Naive thymus-derived CD4-positive, alpha-beta T cell (primary cell): ENCODE measurements at regions of chr6 and their contacts with region 1.

Region 1: GRCh38 chr6:11496152-11497060 is 41.1 kb upstream of the TMEM170B start:
- DNase-seq: peak; percentile 35 to 85 (median 78)
- ATAC-seq: peak; percentile 95
- H3K4me3 ChIP-seq: no peak overlapping the region
- H3K4me3 Mint-ChIP-seq: no peak overlapping the region
- H3K27ac ChIP-seq: no peak overlapping the region
- H3K27ac Mint-ChIP-seq: no peak overlapping the region
- H3K4me1 ChIP-seq: peaks cover 0 to 10% of the 10 kb centered on the region in 2 donors
- H3K4me1 Mint-ChIP-seq: peaks cover 0 to 3% (median 0%) of the 10 kb centered on the region in 7 donors
- H3K27me3 ChIP-seq: no peaks in the 10 kb centered on the region
- H3K27me3 Mint-ChIP-seq: no peaks in the 10 kb centered on the region

Region 2: DNA sequence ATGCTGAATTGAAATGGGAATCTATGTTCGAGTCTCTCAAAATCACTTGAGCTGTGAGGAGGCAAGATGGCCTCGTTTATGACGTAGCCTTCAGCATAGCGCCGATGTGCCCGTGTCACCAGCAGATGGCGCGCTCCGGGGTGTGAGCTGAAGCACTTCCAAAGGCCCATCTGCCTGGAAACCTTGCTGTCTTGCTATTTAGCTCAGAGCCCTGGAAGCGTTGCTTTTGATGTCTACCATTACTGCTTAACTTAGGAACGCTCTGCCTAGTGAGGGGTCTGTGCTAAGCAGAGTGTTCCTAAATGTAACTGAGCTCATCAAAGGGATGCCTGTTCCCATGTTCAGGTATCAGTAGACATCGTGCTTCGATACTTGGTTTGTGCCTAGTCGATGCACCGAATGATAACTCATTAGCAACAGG is 541.8 kb before region 1 on chr6:
- CTCF ChIA-PET with region 1: no interaction called
- POLR2A ChIA-PET with region 1: no interaction called
- intact Hi-C with region 1: loop called (anchors 1 kb)
- DNase-seq: peak; percentile 2 to 71 (median 32)
- ATAC-seq: peak; percentile 69
- H3K4me3 ChIP-seq: no peak overlapping the region
- H3K4me3 Mint-ChIP-seq: no peak overlapping the region
- H3K27ac ChIP-seq: no peak overlapping the region
- H3K27ac Mint-ChIP-seq: peak overlapping the region in 1 of 9 donors; percentile 20
- H3K4me1 ChIP-seq: no peaks in the 10 kb centered on the region
- H3K4me1 Mint-ChIP-seq: no peaks in the 10 kb centered on the region
- H3K27me3 ChIP-seq: no peaks in the 10 kb centered on the region
- H3K27me3 Mint-ChIP-seq: peaks cover 13 to 31% (median 26%) of the 10 kb centered on the region in 5 donors

Region 3: DNA sequence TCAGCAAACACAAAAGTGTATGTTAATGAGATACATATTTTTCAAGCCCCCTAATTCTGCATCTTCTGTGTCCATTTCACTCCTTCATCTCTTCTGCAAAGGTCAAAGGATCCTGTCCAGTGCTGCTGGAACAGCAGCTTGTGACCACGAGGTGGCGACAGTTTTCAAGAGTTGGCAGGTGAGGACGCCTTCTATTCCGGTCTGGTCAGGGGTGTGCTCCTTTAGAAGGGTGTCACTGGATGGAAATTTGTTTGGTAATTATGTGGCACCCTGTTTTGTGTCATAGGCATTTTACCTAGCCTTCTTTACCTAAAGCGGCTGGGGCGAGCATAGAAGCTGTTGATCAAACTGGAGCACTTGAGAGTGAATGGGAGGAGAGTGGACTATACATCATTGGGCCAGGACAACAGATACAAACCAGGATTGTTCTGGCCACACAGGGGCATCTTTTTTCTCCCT is 352.0 kb before region 1 on chr6:
- CTCF ChIA-PET with region 1: interaction called, 46 read pairs
- POLR2A ChIA-PET with region 1: no interaction called
- intact Hi-C with region 1: loop called (anchors 1 kb)
- DNase-seq: peak; percentile 21 to 71 (median 54)
- ATAC-seq: peak; percentile 86
- H3K4me3 ChIP-seq: no peak overlapping the region
- H3K4me3 Mint-ChIP-seq: no peak overlapping the region
- H3K27ac ChIP-seq: no peak overlapping the region
- H3K27ac Mint-ChIP-seq: no peak overlapping the region
- H3K4me1 ChIP-seq: no peaks in the 10 kb centered on the region
- H3K4me1 Mint-ChIP-seq: peaks cover 0 to 7% (median 0%) of the 10 kb centered on the region in 7 donors
- H3K27me3 ChIP-seq: no peaks in the 10 kb centered on the region
- H3K27me3 Mint-ChIP-seq: peaks cover 0 to 5% (median 0%) of the 10 kb centered on the region in 5 donors

Region 4: GRCh38 chr6:11317885-11318771 is 178.3 kb before region 1 on chr6:
- CTCF ChIA-PET with region 1: no interaction called
- POLR2A ChIA-PET with region 1: no interaction called
- intact Hi-C with region 1: loop called in 1 of 2 experiments (anchors 10 kb)
- DNase-seq: peak in 6 of 9 donors; percentile 2 to 53 (median 14)
- ATAC-seq: peak; percentile 90
- H3K4me3 ChIP-seq: no peak overlapping the region
- H3K4me3 Mint-ChIP-seq: peak overlapping the region in 1 of 10 donors; percentile 8
- H3K27ac ChIP-seq: no peak overlapping the region
- H3K27ac Mint-ChIP-seq: peak overlapping the region in 6 of 9 donors; percentile 8 to 62 (median 31)
- H3K4me1 ChIP-seq: peaks cover 0 to 10% of the 10 kb centered on the region in 2 donors
- H3K4me1 Mint-ChIP-seq: peaks cover 13 to 51% (median 30%) of the 10 kb centered on the region in 7 donors
- H3K27me3 ChIP-seq: no peaks in the 10 kb centered on the region
- H3K27me3 Mint-ChIP-seq: no peaks in the 10 kb centered on the region

Region 5: GRCh38 chr6:11485271-11485670 is 11.1 kb before region 1 on chr6:
- CTCF ChIA-PET with region 1: interaction called, 10 read pairs
- POLR2A ChIA-PET with region 1: no interaction called
- intact Hi-C with region 1: no loop called
- DNase-seq: no peak
- ATAC-seq: no peak
- H3K4me3 ChIP-seq: no peak overlapping the region
- H3K4me3 Mint-ChIP-seq: no peak overlapping the region
- H3K27ac ChIP-seq: no peak overlapping the region
- H3K27ac Mint-ChIP-seq: no peak overlapping the region
- H3K4me1 ChIP-seq: no peaks in the 10 kb centered on the region
- H3K4me1 Mint-ChIP-seq: no peaks in the 10 kb centered on the region
- H3K27me3 ChIP-seq: no peaks in the 10 kb centered on the region
- H3K27me3 Mint-ChIP-seq: peaks cover 0 to 5% (median 0%) of the 10 kb centered on the region in 5 donors

Region 6: DNA sequence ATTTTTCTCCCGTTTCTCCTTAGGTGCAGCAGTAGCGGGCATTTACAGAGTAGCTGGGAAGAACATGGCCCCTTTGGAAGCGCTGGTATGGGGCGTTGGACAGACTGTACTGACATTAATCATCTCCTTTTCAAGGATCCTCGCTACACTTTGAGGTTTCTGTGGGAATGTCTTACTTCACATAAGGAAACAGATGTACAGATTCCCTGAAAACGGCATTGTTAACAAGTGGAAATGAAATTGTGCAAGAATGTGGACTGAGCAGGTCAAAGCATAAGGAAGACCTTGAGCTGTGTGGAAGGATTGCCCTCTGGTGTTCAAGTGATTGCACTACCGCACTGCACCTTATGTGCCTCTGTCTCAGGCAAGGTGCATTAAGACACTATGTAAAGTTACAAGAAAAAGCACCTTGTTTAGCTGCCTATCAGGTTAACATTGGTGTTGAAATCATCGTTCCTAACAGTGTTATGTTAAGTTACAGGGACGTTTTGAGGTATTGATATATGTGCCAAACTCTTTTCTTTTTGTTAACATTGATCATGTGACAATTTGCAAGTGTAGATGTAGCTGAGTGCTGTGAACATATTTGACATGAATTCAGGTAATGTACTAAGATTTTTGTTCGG is 79.1 kb after region 1 on chr6:
- CTCF ChIA-PET with region 1: interaction called, 8 read pairs
- POLR2A ChIA-PET with region 1: no interaction called
- intact Hi-C with region 1: loop called (anchors 1 kb)
- DNase-seq: peak; percentile 10 to 54 (median 42)
- ATAC-seq: peak; percentile 97
- H3K4me3 ChIP-seq: no peak overlapping the region
- H3K4me3 Mint-ChIP-seq: no peak overlapping the region
- H3K27ac ChIP-seq: no peak overlapping the region
- H3K27ac Mint-ChIP-seq: no peak overlapping the region
- H3K4me1 ChIP-seq: no peaks in the 10 kb centered on the region
- H3K4me1 Mint-ChIP-seq: peaks cover 0 to 4% (median 0%) of the 10 kb centered on the region in 7 donors
- H3K27me3 ChIP-seq: no peaks in the 10 kb centered on the region
- H3K27me3 Mint-ChIP-seq: no peaks in the 10 kb centered on the region

Region 7: DNA sequence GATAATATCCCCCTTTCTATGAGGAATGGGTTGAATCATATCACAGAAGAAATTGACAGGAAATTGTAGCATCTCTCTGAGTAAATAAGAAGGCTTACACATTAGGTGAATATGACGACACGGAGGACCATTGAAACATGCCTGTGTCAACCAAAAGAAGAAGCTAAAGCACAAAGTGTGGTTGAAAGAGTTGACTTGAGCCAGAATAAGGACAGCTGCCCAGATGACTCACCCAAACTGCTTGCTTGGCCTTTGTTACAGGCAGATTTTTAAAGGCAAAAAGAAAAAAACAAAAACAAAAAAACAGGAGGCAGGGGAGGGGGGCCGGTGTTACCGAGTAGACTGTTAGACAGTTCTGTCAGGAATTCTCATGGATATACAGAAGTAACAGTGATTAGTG is 663.9 kb after region 1 on chr6:
- CTCF ChIA-PET with region 1: no interaction called
- POLR2A ChIA-PET with region 1: no interaction called
- intact Hi-C with region 1: no loop called
- DNase-seq: no peak
- ATAC-seq: no peak
- H3K4me3 ChIP-seq: no peak overlapping the region
- H3K4me3 Mint-ChIP-seq: no peak overlapping the region
- H3K27ac ChIP-seq: no peak overlapping the region
- H3K27ac Mint-ChIP-seq: peak overlapping the region in 4 of 9 donors; percentile 32 to 42 (median 36)
- H3K4me1 ChIP-seq: peaks cover 14 to 20% of the 10 kb centered on the region in 2 donors
- H3K4me1 Mint-ChIP-seq: peaks cover 29 to 77% (median 58%) of the 10 kb centered on the region in 7 donors
- H3K27me3 ChIP-seq: no peaks in the 10 kb centered on the region
- H3K27me3 Mint-ChIP-seq: no peaks in the 10 kb centered on the region